Right cardiac atrium (tissue), 5 donors: ENCODE measurements at regions of chr14 and their contacts with region 1.

Region 1: DNA sequence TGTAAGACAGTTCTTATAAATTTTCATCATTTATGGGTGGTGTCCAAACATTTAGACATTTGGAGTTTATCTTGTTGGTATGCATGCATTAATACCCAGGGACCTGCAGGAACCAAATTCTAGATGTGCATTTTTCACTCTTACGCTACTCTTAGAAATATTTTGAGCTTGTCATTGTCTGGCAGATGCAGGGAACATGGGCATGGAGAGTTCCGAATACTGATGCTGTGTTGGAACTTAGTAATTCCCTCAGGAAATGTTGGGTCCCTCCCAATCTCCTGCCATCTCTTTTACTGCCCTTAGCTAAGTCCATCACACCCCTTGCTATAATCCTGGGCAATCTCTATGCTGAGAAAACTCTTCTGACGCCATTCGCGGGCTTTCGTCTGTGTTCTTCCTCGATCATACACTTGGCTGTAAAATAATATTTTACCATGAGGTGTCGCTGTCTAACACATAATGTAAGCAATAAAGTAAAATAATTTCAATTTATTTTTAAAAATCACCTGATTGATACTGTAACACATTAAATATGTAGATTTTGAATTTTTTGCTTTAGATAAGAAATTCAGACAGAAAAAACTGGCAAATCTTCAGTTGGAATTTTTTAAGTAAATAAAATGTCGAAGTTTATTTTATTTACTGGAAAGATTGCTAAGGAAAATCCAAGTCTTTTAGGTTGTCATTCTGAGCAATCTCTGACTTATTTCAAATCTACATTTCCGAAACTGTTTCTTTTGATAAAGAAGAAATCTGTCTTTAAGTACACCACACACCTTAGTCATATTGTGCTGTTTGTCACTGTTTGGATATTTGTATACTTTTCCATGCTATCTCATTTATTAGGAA is 304.1 kb upstream of the SSTR1 start:
- DNase-seq: no peak
- ATAC-seq: peak in 1 of 2 donors; percentile 53
- H3K4me3 ChIP-seq: no peak overlapping the region
- H3K27ac ChIP-seq: no peak overlapping the region
- H3K4me1 ChIP-seq: peaks cover 1% of the 10 kb centered on the region
- H3K27me3 ChIP-seq: no peaks in the 10 kb centered on the region

Region 2: GRCh38 chr14:38867561-38868150 is 964.1 kb after region 1 on chr14:
- intact Hi-C with region 1: loop called in 3 of 4 experiments (anchors 5 to 10 kb)
- DNase-seq: peak; percentile 58 to 79 (median 61)
- ATAC-seq: peak; percentile 89 to 90
- H3K4me3 ChIP-seq: no peak overlapping the region
- H3K27ac ChIP-seq: no peak overlapping the region
- H3K4me1 ChIP-seq: no peaks in the 10 kb centered on the region
- H3K27me3 ChIP-seq: no peaks in the 10 kb centered on the region

Region 3: GRCh38 chr14:38873941-38874612 is 970.5 kb after region 1 on chr14:
- intact Hi-C with region 1: loop called in 3 of 4 experiments (anchors 5 to 10 kb)
- DNase-seq: no peak
- ATAC-seq: no peak
- H3K4me3 ChIP-seq: no peak overlapping the region
- H3K27ac ChIP-seq: no peak overlapping the region
- H3K4me1 ChIP-seq: peaks cover 4% of the 10 kb centered on the region
- H3K27me3 ChIP-seq: no peaks in the 10 kb centered on the region